Activated CD8-positive, alpha-beta T cell treated with anti-CD3 and anti-CD28 coated beads, Interleukin-2, amount 10 ng/mL, durations not matched to agents 7 days and 5 days (primary cell): ENCODE measurements at regions of chr2 and their contacts with region 1.

Region 1: DNA sequence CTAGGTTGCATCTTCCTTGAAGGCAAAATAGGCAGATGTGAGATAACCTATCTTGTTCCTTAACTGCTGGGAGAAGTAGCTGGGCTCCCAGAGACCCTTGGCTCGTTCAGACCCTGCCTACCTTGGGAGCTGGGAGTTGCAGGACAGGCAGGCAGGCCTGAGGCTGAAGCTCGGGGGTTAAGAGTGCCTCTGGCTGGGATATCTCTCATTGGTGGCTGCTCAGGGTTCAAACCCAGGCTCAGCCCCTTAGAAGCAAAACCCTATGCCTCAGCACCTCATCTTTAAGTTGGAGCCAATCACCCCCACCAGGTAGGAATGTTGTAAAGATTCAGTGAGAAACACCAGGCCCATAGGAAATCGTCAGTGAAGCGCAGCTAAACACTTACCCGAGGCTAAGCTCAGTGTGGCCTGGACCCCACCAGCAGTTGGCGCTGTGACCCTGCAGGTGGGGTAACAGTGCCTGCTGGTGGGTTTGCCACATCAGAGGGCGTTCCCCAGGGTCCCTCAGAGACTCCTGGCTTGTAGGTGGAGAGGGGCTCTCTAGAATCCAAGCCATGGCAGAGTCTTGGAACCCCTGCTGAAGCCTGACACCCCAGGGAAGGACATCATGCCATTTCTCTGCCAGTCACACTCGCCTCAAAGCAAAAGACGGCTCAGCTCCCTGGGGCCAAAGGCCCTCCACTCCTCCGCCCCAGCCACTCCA is 54.6 kb upstream of the GPR17 start:
- DNase-seq: peak; percentile 75
- ATAC-seq: peak; percentile 94
- H3K4me3 Mint-ChIP-seq: no peak overlapping the region
- H3K27ac Mint-ChIP-seq: no peak overlapping the region
- H3K4me1 Mint-ChIP-seq: peaks cover 3% of the 10 kb centered on the region
- H3K27me3 Mint-ChIP-seq: peaks cover 2% of the 10 kb centered on the region

Region 2: GRCh38 chr2:127342101-127342500 is 249.3 kb before region 1 on chr2:
- CTCF ChIA-PET with region 1: no interaction called
- POLR2A ChIA-PET with region 1: no interaction called
- DNase-seq: no peak
- ATAC-seq: no peak
- H3K4me3 Mint-ChIP-seq: no peak overlapping the region
- H3K27ac Mint-ChIP-seq: no peak overlapping the region
- H3K4me1 Mint-ChIP-seq: no peaks in the 10 kb centered on the region
- H3K27me3 Mint-ChIP-seq: no peaks in the 10 kb centered on the region

Region 3: GRCh38 chr2:127609031-127609751 is 17.8 kb after region 1 on chr2:
- CTCF ChIA-PET with region 1: interaction called, 48 read pairs
- POLR2A ChIA-PET with region 1: no interaction called
- DNase-seq: no peak
- ATAC-seq: peak; percentile 30
- H3K4me3 Mint-ChIP-seq: no peak overlapping the region
- H3K27ac Mint-ChIP-seq: no peak overlapping the region
- H3K4me1 Mint-ChIP-seq: peaks cover 16% of the 10 kb centered on the region
- H3K27me3 Mint-ChIP-seq: peaks cover 9% of the 10 kb centered on the region

Region 4: GRCh38 chr2:127637725-127638252 is 46.4 kb after region 1 on chr2:
- CTCF ChIA-PET with region 1: interaction called, 72 read pairs
- POLR2A ChIA-PET with region 1: interaction called, 4 read pairs
- DNase-seq: no peak
- ATAC-seq: no peak
- H3K4me3 Mint-ChIP-seq: peak overlapping the region; percentile 38
- H3K27ac Mint-ChIP-seq: peak overlapping the region; percentile 89
- H3K4me1 Mint-ChIP-seq: peaks cover 57% of the 10 kb centered on the region
- H3K27me3 Mint-ChIP-seq: no peaks in the 10 kb centered on the region

Region 5: GRCh38 chr2:127649684-127650040 is 58.3 kb after region 1 on chr2:
- CTCF ChIA-PET with region 1: interaction called, 174 read pairs
- POLR2A ChIA-PET with region 1: interaction called, 5 read pairs
- DNase-seq: peak; percentile 91
- ATAC-seq: peak; percentile 87
- H3K4me3 Mint-ChIP-seq: peak overlapping the region; percentile 38
- H3K27ac Mint-ChIP-seq: peak overlapping the region; percentile 64
- H3K4me1 Mint-ChIP-seq: peaks cover 18% of the 10 kb centered on the region
- H3K27me3 Mint-ChIP-seq: no peaks in the 10 kb centered on the region

Region 6: DNA sequence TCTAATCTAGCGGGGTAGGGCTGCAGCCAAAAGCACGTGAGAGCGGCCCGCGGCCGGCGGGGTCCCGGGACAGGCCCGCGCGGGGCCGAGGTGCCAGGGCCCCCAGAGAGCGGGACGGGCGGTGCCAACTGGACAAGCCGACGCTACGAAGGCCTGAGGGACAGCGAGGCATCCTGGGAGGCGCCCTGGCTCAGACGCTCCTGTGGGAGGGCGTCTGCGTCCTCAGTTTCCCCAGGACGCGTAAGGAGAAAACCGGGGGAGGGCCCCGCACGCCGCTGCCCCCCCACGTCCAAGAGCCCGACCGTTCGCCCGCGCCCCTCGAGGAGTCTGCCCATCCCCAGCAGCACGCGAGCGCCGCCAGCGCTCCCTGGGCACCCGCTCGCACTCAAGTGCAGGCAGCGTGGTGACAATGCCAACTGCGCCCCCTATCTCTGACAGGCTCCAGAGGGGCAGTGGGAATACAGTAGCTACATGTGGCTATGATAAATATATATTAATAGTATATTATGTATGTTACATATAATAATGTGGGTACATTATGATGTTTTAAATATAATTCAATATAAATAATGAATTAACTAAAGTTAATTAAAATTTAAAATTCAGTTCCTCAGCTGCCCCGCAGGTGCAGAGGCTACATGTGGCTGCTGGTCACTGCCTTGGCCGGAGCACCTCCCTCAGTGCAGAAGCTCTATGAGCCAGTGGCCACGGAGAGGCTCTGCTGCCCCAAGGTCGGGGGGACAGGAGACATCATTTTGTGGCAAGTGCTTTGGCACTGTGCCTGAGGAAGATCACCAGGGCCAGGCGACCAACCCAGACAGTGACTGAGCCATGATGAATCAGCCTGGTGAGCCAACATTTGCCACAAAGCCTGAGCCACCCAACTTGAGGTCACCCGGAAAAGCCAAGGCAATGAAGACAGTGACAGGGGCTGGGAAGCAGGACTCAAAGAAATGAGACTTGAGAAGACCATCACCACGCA is 104.4 kb after region 1 on chr2:
- CTCF ChIA-PET with region 1: interaction called, 36 read pairs
- POLR2A ChIA-PET with region 1: interaction called, 3 read pairs
- DNase-seq: peak; percentile 74
- ATAC-seq: peak; percentile 91
- H3K4me3 Mint-ChIP-seq: no peak overlapping the region
- H3K27ac Mint-ChIP-seq: no peak overlapping the region
- H3K4me1 Mint-ChIP-seq: peaks cover 7% of the 10 kb centered on the region
- H3K27me3 Mint-ChIP-seq: no peaks in the 10 kb centered on the region